T-cell (primary cell): ENCODE measurements at regions of chr3 and their contacts with region 1.

Region 1: DNA sequence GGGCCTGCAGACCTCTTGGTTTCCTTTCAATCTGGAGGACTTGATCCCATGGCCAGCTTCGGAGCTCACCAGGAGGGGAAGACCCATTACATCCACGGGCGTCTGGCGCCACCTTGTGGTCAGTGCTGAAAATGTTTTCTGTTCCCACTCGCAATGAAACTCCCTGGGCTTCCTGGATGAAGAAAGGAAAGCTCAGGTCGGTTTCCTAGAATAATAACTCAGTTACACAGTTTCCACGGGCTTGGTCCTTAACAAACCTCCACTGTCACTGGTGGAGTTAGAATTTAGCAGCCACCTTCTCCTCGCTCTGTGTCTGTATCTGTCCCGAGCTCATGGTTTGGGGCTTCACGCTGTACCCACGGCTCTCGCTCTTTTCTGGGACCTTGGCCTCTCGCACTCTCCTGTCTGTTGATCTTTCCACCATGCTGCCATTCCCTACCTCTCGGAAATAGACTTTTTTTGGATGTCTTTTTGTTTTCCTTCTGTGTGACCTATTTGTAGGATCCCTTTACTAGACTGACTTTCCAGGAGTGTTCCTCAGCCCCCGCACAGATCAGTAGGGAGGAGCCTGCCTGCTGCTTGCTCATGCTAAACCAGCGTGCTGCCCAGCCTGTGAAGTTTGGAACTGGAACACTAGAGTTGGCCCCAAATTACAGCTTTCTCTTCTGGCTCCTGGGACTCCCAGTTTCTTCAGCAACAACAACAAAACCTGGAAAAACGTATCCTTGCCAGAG is 56.3 kb downstream of the IL20RB start:
- DNase-seq: peak; percentile 43 to 91 (median 77)
- ATAC-seq: peak; percentile 81 to 91 (median 87)
- H3K4me3 ChIP-seq: peak overlapping the region; percentile 1 to 32
- H3K4me3 Mint-ChIP-seq: peak overlapping the region; percentile 67 to 80 (median 71)
- H3K27ac ChIP-seq: no peak overlapping the region
- H3K27ac Mint-ChIP-seq: no peak overlapping the region
- H3K4me1 ChIP-seq: peaks cover 0 to 9% of the 10 kb centered on the region in 2 experiments
- H3K4me1 Mint-ChIP-seq: peaks cover 7 to 11% (median 10%) of the 10 kb centered on the region in 3 donors
- H3K27me3 ChIP-seq: no peaks in the 10 kb centered on the region
- H3K27me3 Mint-ChIP-seq: peaks cover 2 to 3% of the 10 kb centered on the region in 2 donors

Region 2: DNA sequence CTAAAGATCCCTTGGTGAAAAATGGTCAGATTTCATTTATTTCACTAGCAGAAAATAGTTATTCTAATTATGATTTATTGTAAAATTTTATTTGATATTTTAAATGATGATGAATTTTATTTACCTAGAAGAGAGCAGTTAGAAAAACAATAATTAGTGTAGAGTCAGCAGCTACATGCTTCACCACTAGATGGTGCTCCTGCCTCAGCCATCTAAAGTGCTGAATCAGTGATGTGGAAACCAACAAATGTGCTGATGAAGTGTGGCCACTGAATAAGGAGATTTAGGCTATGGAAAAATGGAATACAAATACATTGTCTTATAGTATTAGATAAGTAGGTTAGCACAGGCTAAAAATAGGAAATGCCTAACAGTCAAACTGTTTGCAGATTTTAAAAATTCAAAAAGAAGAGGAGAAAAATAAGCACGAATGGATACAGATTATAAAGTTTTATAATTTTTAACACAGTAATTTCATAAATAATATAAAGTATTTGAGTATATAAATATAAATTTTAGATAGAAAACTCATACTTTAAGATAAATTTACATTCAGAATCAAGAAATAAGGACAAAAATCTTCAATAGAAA is 938.8 kb before region 1 on chr3:
- CTCF ChIA-PET with region 1: interaction called, 14 to 35 read pairs
- POLR2A ChIA-PET with region 1: no interaction called
- DNase-seq: peak; percentile 34 to 88 (median 63)
- ATAC-seq: peak; percentile 49 to 71 (median 66)
- H3K4me3 ChIP-seq: no peak overlapping the region
- H3K4me3 Mint-ChIP-seq: no peak overlapping the region
- H3K27ac ChIP-seq: no peak overlapping the region
- H3K27ac Mint-ChIP-seq: no peak overlapping the region
- H3K4me1 ChIP-seq: no peaks in the 10 kb centered on the region
- H3K4me1 Mint-ChIP-seq: peaks cover 0 to 5% (median 2%) of the 10 kb centered on the region in 3 donors
- H3K27me3 ChIP-seq: no peaks in the 10 kb centered on the region
- H3K27me3 Mint-ChIP-seq: no peaks in the 10 kb centered on the region

Region 3: GRCh38 chr3:136390574-136390973 is 623.5 kb before region 1 on chr3:
- CTCF ChIA-PET with region 1: interaction called, 8 to 48 read pairs
- POLR2A ChIA-PET with region 1: no interaction called
- DNase-seq: no peak
- ATAC-seq: no peak
- H3K4me3 ChIP-seq: no peak overlapping the region
- H3K4me3 Mint-ChIP-seq: no peak overlapping the region
- H3K27ac ChIP-seq: no peak overlapping the region
- H3K27ac Mint-ChIP-seq: no peak overlapping the region
- H3K4me1 ChIP-seq: no peaks in the 10 kb centered on the region
- H3K4me1 Mint-ChIP-seq: no peaks in the 10 kb centered on the region
- H3K27me3 ChIP-seq: no peaks in the 10 kb centered on the region
- H3K27me3 Mint-ChIP-seq: no peaks in the 10 kb centered on the region